ENCODE measurements at regions of chr15 and their contacts with region 1.

Region 1: GRCh38 chr15:98442379-98442833 is 205.9 kb upstream of the IGF1R start:
- DNase-seq: peak; percentile 61
- H3K4me3 ChIP-seq: peak overlapping the region in 1 of 2 experiments; percentile 27; a peak in 1 of 4 replicates
- H3K27ac ChIP-seq: no peak overlapping the region
- H3K4me1 ChIP-seq: no peaks in the 10 kb centered on the region
- H3K27me3 ChIP-seq: peaks cover 23% of the 10 kb centered on the region; the same call in 1 of the 2 replicates
- CTCF ChIP-seq: peak; percentile 91
- EP300 ChIP-seq: no peak
- RAD21 ChIP-seq: peak; percentile 82

Region 2: GRCh38 chr15:98428253-98428989 is 14.0 kb before region 1 on chr15:
- CTCF ChIA-PET with region 1: interaction called, 10 read pairs
- POLR2A ChIA-PET with region 1: no interaction called
- DNase-seq: peak; percentile 87
- H3K4me3 ChIP-seq: peak overlapping the region; percentile 31 to 67
- H3K27ac ChIP-seq: no peak overlapping the region
- H3K4me1 ChIP-seq: peaks cover 0 to 2% of the 10 kb centered on the region in 2 experiments; a peak in 1 of 4 replicates
- H3K27me3 ChIP-seq: peaks cover 38% of the 10 kb centered on the region
- CTCF ChIP-seq: peak; percentile 66
- EP300 ChIP-seq: no peak
- RAD21 ChIP-seq: peak; percentile 55

Measured in SK-N-SH (cell line).